ENCODE measurements at regions of chr16 and their contacts with region 1.

Region 1: GRCh38 chr16:49575391-49575790 is 201.8 kb downstream of the C16orf78 start:
- DNase-seq: peak; percentile 84
- H3K4me3 ChIP-seq: no peak overlapping the region
- H3K27ac ChIP-seq: peak overlapping the region; percentile 8
- H3K4me1 ChIP-seq: peaks cover 21% of the 10 kb centered on the region
- CTCF ChIP-seq: no peak

Region 2: GRCh38 chr16:49524216-49524946 is 51.0 kb before region 1 on chr16:
- CTCF ChIA-PET with region 1: no interaction called
- POLR2A ChIA-PET with region 1: no interaction called
- intact Hi-C with region 1: loop called (anchors 5 kb)
- DNase-seq: no peak
- H3K4me3 ChIP-seq: no peak overlapping the region
- H3K27ac ChIP-seq: no peak overlapping the region
- H3K4me1 ChIP-seq: peaks cover 37% of the 10 kb centered on the region
- CTCF ChIP-seq: no peak